Activated CD4-positive, alpha-beta T cell treated with anti-CD3 and anti-CD28 coated beads for 36 hours (primary cell): ENCODE measurements at regions of chr17 and their contacts with region 1.

Region 1: GRCh38 chr17:36849871-36850348 is 87.4 kb upstream of the LHX1 start:
- DNase-seq: peak; percentile 81
- ATAC-seq: peak; percentile 74
- H3K4me3 Mint-ChIP-seq: peak overlapping the region; percentile 50
- H3K27ac Mint-ChIP-seq: peak overlapping the region; percentile 78
- H3K4me1 Mint-ChIP-seq: peaks cover 39% of the 10 kb centered on the region
- H3K27me3 Mint-ChIP-seq: peaks cover 9% of the 10 kb centered on the region

Region 2: DNA sequence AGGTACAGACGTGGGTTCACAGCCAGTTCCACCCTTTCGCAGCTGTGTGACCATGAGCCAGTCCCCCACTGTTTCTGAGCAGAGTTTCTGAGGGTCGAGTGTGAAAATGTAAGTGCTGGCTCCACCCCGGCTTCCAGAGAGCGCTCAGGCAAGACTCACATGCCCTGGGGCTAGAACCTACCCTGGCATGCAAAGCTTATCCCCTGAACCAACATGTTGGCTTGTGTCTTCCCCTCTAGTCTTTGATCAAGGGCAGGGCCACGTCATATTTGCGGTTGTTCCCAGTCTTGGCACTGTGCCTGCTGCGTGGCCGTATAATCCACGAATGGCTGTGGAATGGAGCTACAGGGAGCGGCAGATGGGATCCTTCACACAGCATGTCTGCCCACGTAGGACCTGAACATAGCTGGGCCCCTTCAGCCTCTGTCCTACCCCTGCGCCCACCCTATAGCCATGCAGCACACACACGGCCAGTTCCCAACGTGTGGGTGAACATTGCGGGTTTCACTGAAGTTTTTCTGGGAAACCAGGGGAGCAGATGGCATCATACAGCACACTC is 163.7 kb before region 1 on chr17:
- CTCF ChIA-PET with region 1: no interaction called
- POLR2A ChIA-PET with region 1: no interaction called
- intact Hi-C with region 1: no loop called
- DNase-seq: no peak
- ATAC-seq: no peak
- H3K4me3 Mint-ChIP-seq: no peak overlapping the region
- H3K27ac Mint-ChIP-seq: no peak overlapping the region
- H3K4me1 Mint-ChIP-seq: no peaks in the 10 kb centered on the region
- H3K27me3 Mint-ChIP-seq: no peaks in the 10 kb centered on the region

Region 3: GRCh38 chr17:36921095-36921851 is 71.4 kb after region 1 on chr17:
- CTCF ChIA-PET with region 1: no interaction called
- POLR2A ChIA-PET with region 1: interaction called, 3 read pairs
- intact Hi-C with region 1: loop called in 1 of 2 experiments (anchors 2 kb)
- DNase-seq: peak; percentile 85
- ATAC-seq: peak; percentile 93
- H3K4me3 Mint-ChIP-seq: peak overlapping the region; percentile 24
- H3K27ac Mint-ChIP-seq: peak overlapping the region; percentile 85
- H3K4me1 Mint-ChIP-seq: peaks cover 20% of the 10 kb centered on the region
- H3K27me3 Mint-ChIP-seq: peaks cover 42% of the 10 kb centered on the region

Region 4: DNA sequence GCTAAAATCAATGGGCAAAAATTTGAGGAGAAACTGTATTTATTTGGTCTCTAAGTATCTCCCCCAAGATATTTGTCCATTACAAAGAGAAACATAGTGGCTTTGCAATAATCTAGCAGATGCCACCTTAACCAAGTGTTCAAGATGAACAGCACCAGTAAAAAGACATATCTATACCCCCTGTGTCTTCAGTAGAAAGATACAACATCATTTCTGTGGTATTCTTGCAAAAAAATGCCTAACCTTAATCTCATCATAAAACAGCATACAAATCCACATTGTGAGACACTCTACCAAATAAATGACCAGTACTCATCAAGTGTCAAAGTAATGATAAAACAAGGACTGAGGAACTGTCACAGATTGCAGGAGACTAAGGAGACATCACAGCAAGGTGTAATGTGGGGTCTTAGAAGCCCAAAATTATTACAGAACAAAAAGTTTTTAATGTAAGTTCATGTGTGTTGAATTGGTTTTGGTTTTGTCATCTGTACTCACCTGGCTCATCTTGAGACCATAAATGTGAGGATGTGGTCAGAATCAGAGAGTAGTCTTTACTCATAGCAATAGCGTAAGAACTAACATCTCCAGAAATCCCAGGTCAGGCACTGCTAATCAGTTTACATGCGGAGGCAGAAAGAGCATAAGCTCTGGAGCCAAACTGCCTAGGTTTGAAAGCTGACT is 176.1 kb after region 1 on chr17:
- CTCF ChIA-PET with region 1: no interaction called
- POLR2A ChIA-PET with region 1: no interaction called
- intact Hi-C with region 1: loop called in 1 of 2 experiments (anchors 5 kb)
- DNase-seq: peak; percentile 19
- ATAC-seq: peak; percentile 98
- H3K4me3 Mint-ChIP-seq: no peak overlapping the region
- H3K27ac Mint-ChIP-seq: peak overlapping the region; percentile 28
- H3K4me1 Mint-ChIP-seq: peaks cover 29% of the 10 kb centered on the region
- H3K27me3 Mint-ChIP-seq: no peaks in the 10 kb centered on the region